Common myeloid progenitor, CD34-positive (primary cell): ENCODE measurements at regions of chr5 and their contacts with region 1.

Region 1: GRCh38 chr5:150523472-150524350 is 15.8 kb downstream of the NDST1 start:
- DNase-seq: peak; percentile 73 to 84 (median 78)
- H3K4me3 ChIP-seq: no peak overlapping the region
- H3K27ac ChIP-seq: no peak overlapping the region
- H3K4me1 ChIP-seq: no peaks in the 10 kb centered on the region
- H3K27me3 ChIP-seq: no peaks in the 10 kb centered on the region

Region 2: GRCh38 chr5:150458819-150459557 is 64.7 kb before region 1 on chr5:
- CTCF ChIA-PET with region 1: interaction called, 59 read pairs
- POLR2A ChIA-PET with region 1: interaction called, 3 read pairs
- DNase-seq: peak; percentile 59 to 79 (median 74)
- H3K4me3 ChIP-seq: peak overlapping the region in 3 of 7 experiments; percentile 32 to 56 (median 54)
- H3K27ac ChIP-seq: no peak overlapping the region
- H3K4me1 ChIP-seq: peaks cover 14 to 82% (median 59%) of the 10 kb centered on the region in 4 experiments
- H3K27me3 ChIP-seq: no peaks in the 10 kb centered on the region

Region 3: DNA sequence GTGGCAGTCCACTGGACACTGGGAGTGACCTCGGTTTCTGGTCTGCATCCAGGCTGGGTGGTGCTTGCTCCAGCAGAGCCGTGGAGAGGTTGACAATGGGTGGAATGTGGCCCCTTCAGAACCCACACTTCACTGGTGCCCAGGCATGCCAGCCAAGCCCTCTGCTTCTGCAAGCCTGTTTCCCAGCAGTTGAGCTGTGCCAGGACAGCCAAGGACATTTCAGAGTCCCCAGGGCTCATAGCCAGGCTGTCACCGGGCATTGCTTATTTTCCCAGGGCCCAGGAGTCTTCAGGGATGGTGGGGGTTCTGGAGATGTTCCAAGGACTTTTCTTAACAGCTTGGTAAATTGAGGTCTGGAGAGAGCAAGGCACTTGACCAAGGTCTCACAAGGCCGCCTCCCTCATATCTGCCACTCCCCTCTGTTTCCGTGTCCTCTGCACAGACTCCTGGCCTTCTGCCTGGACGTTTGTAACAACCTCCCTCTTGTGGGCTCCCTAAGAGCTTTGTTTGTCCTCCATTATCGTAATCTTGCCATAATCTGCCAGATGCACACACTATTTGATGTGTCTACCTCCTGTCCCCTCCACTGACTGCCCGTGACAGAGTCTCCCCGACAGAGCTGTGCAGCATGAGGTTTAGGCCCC is 19.6 kb before region 1 on chr5:
- CTCF ChIA-PET with region 1: interaction called, 37 read pairs
- POLR2A ChIA-PET with region 1: no interaction called
- DNase-seq: no peak
- H3K4me3 ChIP-seq: no peak overlapping the region
- H3K27ac ChIP-seq: no peak overlapping the region
- H3K4me1 ChIP-seq: peaks cover 0 to 21% (median 8%) of the 10 kb centered on the region in 4 experiments
- H3K27me3 ChIP-seq: no peaks in the 10 kb centered on the region

Region 4: DNA sequence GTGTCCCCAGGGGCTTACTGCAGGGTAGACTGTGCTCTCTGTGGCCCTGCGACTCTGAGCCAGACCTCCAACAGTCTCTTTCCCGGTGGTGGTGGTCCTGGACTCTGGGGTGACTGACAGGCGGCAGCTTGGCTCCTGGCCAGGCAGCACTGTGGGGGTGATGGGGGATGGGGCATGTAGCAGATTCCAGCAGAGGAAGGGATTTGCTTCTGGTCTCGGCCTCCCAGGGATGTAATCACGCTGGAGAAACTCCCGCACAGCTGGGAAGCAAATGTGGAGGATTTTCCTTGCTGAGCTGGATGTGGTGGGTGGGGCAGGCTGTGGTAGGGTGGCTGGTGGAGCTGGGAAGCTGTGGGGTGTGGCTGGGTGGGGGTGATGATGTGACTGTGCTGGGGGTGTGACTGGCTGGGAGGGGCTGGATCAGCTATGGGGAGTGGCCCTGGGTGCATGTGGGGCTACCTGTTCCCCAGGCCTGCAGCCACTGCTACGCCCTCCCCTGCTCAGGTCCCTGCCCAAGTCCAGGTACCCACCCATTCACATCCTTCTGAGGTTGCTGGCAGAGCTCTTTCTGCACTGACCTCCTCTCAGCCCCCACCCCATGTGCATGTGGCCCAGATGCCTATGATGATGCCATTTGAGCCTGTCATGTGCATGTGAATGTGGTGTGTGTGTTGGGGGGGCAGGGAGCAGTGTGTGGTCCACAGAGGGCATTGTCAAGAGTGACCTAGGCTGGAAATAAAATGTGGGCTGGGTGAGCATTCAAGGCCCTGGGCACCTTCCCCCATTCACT is 11.9 kb before region 1 on chr5:
- CTCF ChIA-PET with region 1: interaction called, 37 read pairs
- POLR2A ChIA-PET with region 1: no interaction called
- DNase-seq: no peak
- H3K4me3 ChIP-seq: no peak overlapping the region
- H3K27ac ChIP-seq: no peak overlapping the region
- H3K4me1 ChIP-seq: peaks cover 0 to 29% (median 7%) of the 10 kb centered on the region in 4 experiments
- H3K27me3 ChIP-seq: no peaks in the 10 kb centered on the region

Region 5: GRCh38 chr5:150544611-150545219 is 21.0 kb after region 1 on chr5:
- CTCF ChIA-PET with region 1: interaction called, 11 read pairs
- POLR2A ChIA-PET with region 1: no interaction called
- DNase-seq: peak; percentile 55 to 63 (median 57)
- H3K4me3 ChIP-seq: no peak overlapping the region
- H3K27ac ChIP-seq: no peak overlapping the region
- H3K4me1 ChIP-seq: peaks cover 0 to 19% (median 9%) of the 10 kb centered on the region in 4 experiments
- H3K27me3 ChIP-seq: no peaks in the 10 kb centered on the region

Region 6: GRCh38 chr5:150554857-150555256 is 31.1 kb after region 1 on chr5:
- CTCF ChIA-PET with region 1: interaction called, 11 read pairs
- POLR2A ChIA-PET with region 1: no interaction called
- DNase-seq: no peak
- H3K4me3 ChIP-seq: no peak overlapping the region
- H3K27ac ChIP-seq: no peak overlapping the region
- H3K4me1 ChIP-seq: peaks cover 1 to 52% (median 27%) of the 10 kb centered on the region in 4 experiments
- H3K27me3 ChIP-seq: no peaks in the 10 kb centered on the region